ENCODE measurements at regions of chr7 and their contacts with region 1.

Region 1: DNA sequence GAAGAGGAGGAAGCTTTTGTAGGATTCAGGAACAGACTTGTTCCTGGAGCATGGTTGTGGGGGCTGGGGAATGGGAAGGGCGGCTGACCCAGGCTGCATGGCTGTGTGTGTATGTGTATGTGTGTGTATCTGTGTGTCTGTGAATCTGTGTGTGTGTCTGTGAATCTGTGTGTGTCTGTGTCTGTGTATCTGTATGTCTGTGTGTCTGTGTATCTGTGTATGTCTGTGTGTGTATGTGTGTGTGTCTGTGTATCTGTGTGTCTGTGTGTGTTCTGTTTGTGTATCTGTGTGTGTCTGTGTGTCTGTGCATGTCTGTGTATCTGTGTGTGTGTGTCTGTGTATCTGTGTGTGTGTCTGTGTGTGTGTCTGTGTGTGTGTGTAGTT is 6.6 kb upstream of the STX1A start:
- DNase-seq: no peak
- ATAC-seq: peak; percentile 48
- H3K4me3 ChIP-seq: no peak overlapping the region
- H3K27ac ChIP-seq: no peak overlapping the region
- H3K4me1 ChIP-seq: no peaks in the 10 kb centered on the region; the same call in 1 of the 2 replicates
- H3K27me3 ChIP-seq: no peaks in the 10 kb centered on the region
- CTCF ChIP-seq: no peak
- EP300 ChIP-seq: no peak
- POLR2A ChIP-seq: no peak
- RAD21 ChIP-seq: no peak

Region 2: GRCh38 chr7:73626814-73627213 is 99.3 kb before region 1 on chr7:
- CTCF ChIA-PET with region 1: interaction called, 3 read pairs
- POLR2A ChIA-PET with region 1: no interaction called
- RAD21 ChIA-PET with region 1: no interaction called
- SMC1A ChIA-PET with region 1: no interaction called
- in situ Hi-C with region 1: no loop called
- intact Hi-C with region 1: loop called (anchors 5 kb)
- DNase-seq: no peak
- ATAC-seq: no peak
- H3K4me3 ChIP-seq: no peak overlapping the region
- H3K27ac ChIP-seq: no peak overlapping the region
- H3K4me1 ChIP-seq: no peaks in the 10 kb centered on the region
- H3K27me3 ChIP-seq: peaks cover 0 to 6% of the 10 kb centered on the region in 2 experiments; a peak in 2 of 4 replicates
- CTCF ChIP-seq: no peak
- EP300 ChIP-seq: no peak
- POLR2A ChIP-seq: no peak
- RAD21 ChIP-seq: no peak

Region 3: DNA sequence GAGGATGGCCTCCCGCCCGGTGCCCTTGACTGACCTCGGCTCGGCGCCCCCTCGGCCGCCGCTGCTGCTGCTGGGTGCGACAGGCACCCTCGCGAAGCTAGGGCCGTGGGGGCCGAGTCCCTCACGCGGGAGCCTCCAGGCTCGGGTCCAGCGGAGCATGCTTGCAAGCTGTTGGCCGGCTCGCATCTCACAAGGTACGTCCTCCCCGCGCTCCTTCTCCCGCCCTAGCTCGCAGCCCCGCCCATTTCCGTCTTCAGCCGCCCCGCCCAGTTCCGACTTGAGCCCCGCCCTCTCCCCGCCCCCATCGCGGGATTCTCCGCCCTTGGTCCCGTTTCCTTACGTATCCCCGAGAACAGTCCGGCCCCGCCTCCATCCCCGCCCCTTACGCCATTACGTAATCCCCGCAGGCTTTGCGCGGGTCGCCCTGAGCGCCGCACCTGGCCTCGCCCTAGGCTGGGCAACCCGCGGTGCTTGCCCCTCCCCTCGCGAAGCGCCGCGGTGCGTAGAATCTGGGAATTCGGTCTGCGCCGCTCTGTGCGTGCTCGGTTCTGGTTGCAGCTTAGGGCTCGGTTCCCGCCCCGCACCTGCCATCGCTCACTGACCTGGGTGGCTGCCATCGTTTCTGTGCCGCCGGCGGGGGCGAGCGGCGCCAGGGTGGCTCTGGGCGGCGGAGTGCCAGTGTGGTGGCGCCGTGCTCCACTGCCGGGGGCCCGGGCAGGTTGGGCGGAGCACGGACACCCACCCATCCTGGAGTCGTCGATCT is 12.7 kb after region 1 on chr7 and contains the start of gene ABHD11:
- CTCF ChIA-PET with region 1: interaction called, 13 read pairs
- POLR2A ChIA-PET with region 1: no interaction called
- RAD21 ChIA-PET with region 1: interaction called, 6 read pairs
- SMC1A ChIA-PET with region 1: no interaction called
- in situ Hi-C with region 1: no loop called
- intact Hi-C with region 1: no loop called
- DNase-seq: peak; percentile 90
- ATAC-seq: peak; percentile 89
- H3K4me3 ChIP-seq: peak within 1 kb of the TSS; percentile 92
- H3K27ac ChIP-seq: peak within 1 kb of the TSS; percentile 79
- H3K4me1 ChIP-seq: no peaks in the 10 kb centered on the region; the same call in 1 of the 2 replicates
- H3K27me3 ChIP-seq: no peaks in the 10 kb centered on the region
- CTCF ChIP-seq: no peak
- EP300 ChIP-seq: no peak
- POLR2A ChIP-seq: peak; percentile 92
- RAD21 ChIP-seq: no peak
- polyA plus RNA-seq, gene ABHD11: 2.8 to 5.6 TPM

Region 4: GRCh38 chr7:73766556-73767229 is 40.6 kb after region 1 on chr7:
- CTCF ChIA-PET with region 1: no interaction called
- POLR2A ChIA-PET with region 1: no interaction called
- RAD21 ChIA-PET with region 1: no interaction called
- SMC1A ChIA-PET with region 1: no interaction called
- in situ Hi-C with region 1: no loop called
- intact Hi-C with region 1: no loop called
- DNase-seq: no peak
- ATAC-seq: no peak; the same call in 2 of the 3 replicates
- H3K4me3 ChIP-seq: no peak overlapping the region
- H3K27ac ChIP-seq: no peak overlapping the region
- H3K4me1 ChIP-seq: no peaks in the 10 kb centered on the region
- H3K27me3 ChIP-seq: peaks cover 0 to 2% of the 10 kb centered on the region in 2 experiments; a peak in 1 of 4 replicates
- CTCF ChIP-seq: no peak
- EP300 ChIP-seq: no peak
- POLR2A ChIP-seq: no peak
- RAD21 ChIP-seq: no peak

Region 5: GRCh38 chr7:73899731-73900142 is 173.7 kb after region 1 on chr7:
- CTCF ChIA-PET with region 1: no interaction called
- POLR2A ChIA-PET with region 1: no interaction called
- RAD21 ChIA-PET with region 1: no interaction called
- SMC1A ChIA-PET with region 1: no interaction called
- in situ Hi-C with region 1: no loop called
- intact Hi-C with region 1: no loop called
- DNase-seq: no peak
- ATAC-seq: no peak
- H3K4me3 ChIP-seq: no peak overlapping the region
- H3K27ac ChIP-seq: no peak overlapping the region
- H3K4me1 ChIP-seq: no peaks in the 10 kb centered on the region
- H3K27me3 ChIP-seq: no peaks in the 10 kb centered on the region
- CTCF ChIP-seq: no peak
- EP300 ChIP-seq: no peak
- POLR2A ChIP-seq: no peak
- RAD21 ChIP-seq: no peak

Region 6: GRCh38 chr7:73909996-73910395 is 183.9 kb after region 1 on chr7:
- CTCF ChIA-PET with region 1: no interaction called
- POLR2A ChIA-PET with region 1: no interaction called
- RAD21 ChIA-PET with region 1: no interaction called
- SMC1A ChIA-PET with region 1: no interaction called
- in situ Hi-C with region 1: no loop called
- intact Hi-C with region 1: no loop called
- DNase-seq: no peak
- ATAC-seq: no peak
- H3K4me3 ChIP-seq: no peak overlapping the region
- H3K27ac ChIP-seq: no peak overlapping the region
- H3K4me1 ChIP-seq: no peaks in the 10 kb centered on the region
- H3K27me3 ChIP-seq: no peaks in the 10 kb centered on the region; a peak in 1 of 4 replicates
- CTCF ChIP-seq: no peak
- EP300 ChIP-seq: no peak
- POLR2A ChIP-seq: no peak
- RAD21 ChIP-seq: no peak

Region 7: DNA sequence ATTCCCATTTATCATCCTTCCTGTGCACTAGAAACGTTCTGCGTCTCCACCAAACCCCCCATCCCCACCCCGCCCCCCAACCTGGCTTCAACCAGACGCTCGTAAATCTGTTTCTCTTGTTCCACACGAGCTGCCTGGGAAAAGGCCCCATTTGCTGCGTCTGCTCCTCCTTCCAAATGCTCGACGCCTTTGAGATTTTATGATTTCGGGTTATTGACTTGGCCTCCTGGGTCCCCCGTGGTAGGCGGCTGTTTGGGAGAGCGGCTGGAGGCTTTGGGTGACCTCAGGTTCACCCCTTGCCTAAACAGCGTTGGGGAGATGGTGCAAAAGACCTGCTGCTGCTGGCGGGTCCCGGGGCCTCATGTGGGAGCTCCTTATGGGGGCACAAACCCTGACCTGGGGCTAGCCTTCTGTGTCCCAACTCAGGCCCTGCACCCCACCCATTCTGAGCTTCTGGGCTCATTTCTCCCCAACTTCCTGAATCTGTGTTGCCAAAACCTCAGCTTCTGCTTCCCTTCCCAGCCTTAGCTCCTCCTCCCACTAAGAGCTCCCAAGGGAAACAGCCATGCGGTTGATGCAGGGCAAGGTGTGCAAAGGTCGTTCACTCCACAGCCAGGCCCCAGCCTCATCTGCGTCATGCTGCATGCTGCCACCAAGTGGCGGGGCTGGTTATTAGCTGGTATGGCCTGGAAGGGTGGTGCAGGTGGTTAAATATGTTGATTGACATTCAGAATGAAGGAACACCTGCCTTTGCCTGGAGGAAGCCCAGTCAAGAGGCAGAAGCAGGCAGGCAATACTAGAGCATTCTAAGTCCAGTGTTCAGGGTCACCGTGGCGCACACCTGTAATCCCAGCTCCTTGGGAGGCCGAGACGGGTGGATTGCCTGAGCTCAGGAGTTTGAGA is 252.8 kb after region 1 on chr7:
- CTCF ChIA-PET with region 1: no interaction called
- POLR2A ChIA-PET with region 1: no interaction called
- RAD21 ChIA-PET with region 1: no interaction called
- SMC1A ChIA-PET with region 1: no interaction called
- in situ Hi-C with region 1: no loop called
- intact Hi-C with region 1: no loop called
- DNase-seq: peak; percentile 45
- ATAC-seq: peak; percentile 99
- H3K4me3 ChIP-seq: no peak overlapping the region
- H3K27ac ChIP-seq: no peak overlapping the region
- H3K4me1 ChIP-seq: no peaks in the 10 kb centered on the region
- H3K27me3 ChIP-seq: no peaks in the 10 kb centered on the region
- CTCF ChIP-seq: peak; percentile 48 to 76 (median 76)
- EP300 ChIP-seq: no peak
- POLR2A ChIP-seq: no peak
- RAD21 ChIP-seq: peak; percentile 42; the same call in 1 of the 2 replicates